Thyroid gland (tissue), 4 donors: ENCODE measurements at regions of chr4 and their contacts with region 1.

Region 1: DNA sequence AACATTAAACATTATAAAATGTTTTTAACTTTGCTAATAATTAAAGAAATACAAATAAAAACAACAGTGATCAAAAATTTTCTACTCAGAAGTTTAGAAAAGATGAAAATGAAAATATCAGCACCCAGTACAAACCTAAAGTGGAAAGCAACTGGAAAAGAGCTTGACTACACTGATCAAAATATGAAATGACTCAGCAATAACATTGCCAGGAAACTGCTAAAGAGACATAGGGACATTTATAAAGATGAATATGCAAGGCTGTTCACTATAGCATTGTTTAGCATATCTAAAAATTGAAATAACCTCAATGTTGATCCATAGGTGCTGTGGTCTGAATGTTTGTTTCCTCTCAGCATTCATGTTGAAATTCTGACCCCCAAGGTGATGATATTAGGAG is 88.5 kb upstream of the NOCT start:
- DNase-seq: no peak
- H3K4me3 ChIP-seq: no peak overlapping the region
- H3K27ac ChIP-seq: no peak overlapping the region
- H3K4me1 ChIP-seq: peaks cover 11 to 14% of the 10 kb centered on the region in 2 donors
- H3K27me3 ChIP-seq: no peaks in the 10 kb centered on the region
- CTCF ChIP-seq: no peak
- POLR2A ChIP-seq: no peak

Region 2: DNA sequence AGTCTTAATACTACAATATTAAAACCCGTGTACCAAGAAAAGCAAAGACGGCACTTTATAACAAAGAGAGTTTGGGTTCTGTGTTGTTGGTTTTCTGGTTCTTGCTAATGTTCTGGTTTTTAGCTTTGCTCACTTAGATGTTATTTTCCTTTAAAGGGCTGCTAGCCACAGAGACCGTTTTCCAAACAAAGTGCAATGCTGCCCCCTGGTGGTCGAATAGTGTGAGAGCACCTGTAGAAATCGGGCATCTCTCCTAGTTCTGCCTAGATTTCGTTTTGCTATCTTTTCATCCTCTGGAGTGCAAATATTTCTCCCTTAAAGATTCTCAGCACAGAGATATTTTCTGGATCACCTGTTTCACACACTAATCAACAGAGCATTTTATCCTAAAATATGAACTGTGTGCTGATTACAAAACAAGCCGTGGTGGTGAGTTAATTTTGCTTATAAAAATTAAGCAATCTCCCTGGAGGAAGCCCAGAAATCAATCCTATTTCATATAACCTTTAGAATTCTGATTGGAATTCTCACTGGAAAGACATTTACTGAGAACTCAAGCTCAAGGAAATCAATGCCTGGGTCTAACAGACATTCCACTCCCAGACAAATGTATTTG is 246.0 kb before region 1 on chr4:
- intact Hi-C with region 1: loop called (anchors 10 kb)
- DNase-seq: peak; percentile 76 to 91
- H3K4me3 ChIP-seq: no peak overlapping the region
- H3K27ac ChIP-seq: no peak overlapping the region
- H3K4me1 ChIP-seq: peaks cover 0 to 7% of the 10 kb centered on the region in 2 donors
- H3K27me3 ChIP-seq: no peaks in the 10 kb centered on the region
- CTCF ChIP-seq: peak; percentile 85 to 98 (median 86)
- POLR2A ChIP-seq: no peak

Region 3: GRCh38 chr4:138875891-138876613 is 51.0 kb before region 1 on chr4:
- intact Hi-C with region 1: no loop called
- DNase-seq: no peak
- H3K4me3 ChIP-seq: no peak overlapping the region
- H3K27ac ChIP-seq: no peak overlapping the region
- H3K4me1 ChIP-seq: peaks cover 7 to 17% of the 10 kb centered on the region in 2 donors
- H3K27me3 ChIP-seq: no peaks in the 10 kb centered on the region
- CTCF ChIP-seq: no peak
- POLR2A ChIP-seq: no peak